ENCODE measurements at regions of chr1 and their contacts with region 1.

Region 1: GRCh38 chr1:24586970-24587820 is 31.3 kb downstream of the NCMAP start:
- DNase-seq: peak; percentile 71
- H3K4me3 Mint-ChIP-seq: peak overlapping the region; percentile 24
- H3K27ac Mint-ChIP-seq: peak overlapping the region; percentile 72
- H3K4me1 Mint-ChIP-seq: peaks cover 5% of the 10 kb centered on the region
- H3K27me3 Mint-ChIP-seq: no peaks in the 10 kb centered on the region

Region 2: GRCh38 chr1:24424207-24424606 is 163.0 kb before region 1 on chr1:
- CTCF ChIA-PET with region 1: interaction called, 39 read pairs
- intact Hi-C with region 1: no loop called
- DNase-seq: peak; percentile 31
- H3K4me3 Mint-ChIP-seq: no peak overlapping the region
- H3K27ac Mint-ChIP-seq: peak overlapping the region; percentile 34
- H3K4me1 Mint-ChIP-seq: peaks cover 68% of the 10 kb centered on the region
- H3K27me3 Mint-ChIP-seq: no peaks in the 10 kb centered on the region

Region 3: GRCh38 chr1:24526940-24527542 is 60.2 kb before region 1 on chr1:
- CTCF ChIA-PET with region 1: interaction called, 10 read pairs
- intact Hi-C with region 1: no loop called
- DNase-seq: peak; percentile 74
- H3K4me3 Mint-ChIP-seq: no peak overlapping the region
- H3K27ac Mint-ChIP-seq: peak overlapping the region; percentile 63
- H3K4me1 Mint-ChIP-seq: peaks cover 70% of the 10 kb centered on the region
- H3K27me3 Mint-ChIP-seq: no peaks in the 10 kb centered on the region

Region 4: DNA sequence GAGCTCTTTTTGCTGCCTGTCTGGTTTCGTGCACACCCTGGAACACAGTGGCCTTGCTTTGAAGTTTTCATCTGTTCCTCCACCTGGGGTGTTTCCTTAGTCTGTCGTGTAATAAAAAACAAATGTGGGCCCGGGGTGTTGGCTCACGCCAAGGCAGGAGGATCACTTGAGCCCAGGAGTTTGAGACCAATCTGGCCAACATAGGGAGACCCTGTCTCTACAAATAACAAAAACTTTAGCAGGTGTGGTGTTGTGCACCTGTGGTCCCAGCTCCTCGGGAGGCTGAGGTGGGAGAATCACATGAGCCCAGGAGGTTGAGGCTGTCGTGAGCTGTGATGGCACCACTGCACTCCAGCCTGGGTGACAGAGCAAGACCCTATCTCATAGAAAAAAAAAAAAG is 26.8 kb before region 1 on chr1:
- CTCF ChIA-PET with region 1: interaction called, 14 read pairs
- intact Hi-C with region 1: no loop called
- DNase-seq: no peak
- H3K4me3 Mint-ChIP-seq: no peak overlapping the region
- H3K27ac Mint-ChIP-seq: no peak overlapping the region
- H3K4me1 Mint-ChIP-seq: peaks cover 13% of the 10 kb centered on the region
- H3K27me3 Mint-ChIP-seq: peaks cover 3% of the 10 kb centered on the region

Region 5: DNA sequence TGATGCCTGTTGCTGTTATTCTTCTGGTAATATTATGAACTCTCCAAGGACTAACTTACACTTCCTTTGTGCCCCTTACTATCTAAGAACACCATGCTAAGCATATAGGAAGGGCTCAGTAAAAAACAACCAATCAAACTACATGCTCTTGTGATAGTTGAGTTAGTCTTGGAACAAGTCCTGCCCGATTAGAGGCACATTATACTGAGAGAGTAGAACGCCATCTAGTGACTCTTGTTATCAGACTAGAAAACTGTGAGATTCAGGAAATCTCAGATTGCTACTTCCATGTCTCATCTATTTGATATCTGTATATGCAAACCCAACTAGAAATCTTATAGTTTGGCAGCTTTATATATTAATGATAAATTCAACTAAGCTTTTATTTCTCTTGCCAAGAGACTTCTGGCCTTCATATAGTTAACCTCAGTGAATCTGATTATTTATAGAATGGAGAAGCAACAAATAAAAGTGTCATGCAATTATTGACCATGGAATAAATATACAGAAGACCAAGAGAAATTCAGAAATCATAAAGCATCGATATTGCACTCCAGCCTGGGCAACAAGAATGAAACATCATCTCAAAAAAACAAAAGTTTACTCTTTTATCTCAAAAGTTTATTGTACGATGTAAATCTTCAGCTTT is 48.1 kb after region 1 on chr1:
- CTCF ChIA-PET with region 1: interaction called, 4 read pairs
- intact Hi-C with region 1: loop called (anchors 5 kb)
- DNase-seq: no peak
- H3K4me3 Mint-ChIP-seq: no peak overlapping the region
- H3K27ac Mint-ChIP-seq: no peak overlapping the region
- H3K4me1 Mint-ChIP-seq: peaks cover 11% of the 10 kb centered on the region
- H3K27me3 Mint-ChIP-seq: no peaks in the 10 kb centered on the region

Region 6: DNA sequence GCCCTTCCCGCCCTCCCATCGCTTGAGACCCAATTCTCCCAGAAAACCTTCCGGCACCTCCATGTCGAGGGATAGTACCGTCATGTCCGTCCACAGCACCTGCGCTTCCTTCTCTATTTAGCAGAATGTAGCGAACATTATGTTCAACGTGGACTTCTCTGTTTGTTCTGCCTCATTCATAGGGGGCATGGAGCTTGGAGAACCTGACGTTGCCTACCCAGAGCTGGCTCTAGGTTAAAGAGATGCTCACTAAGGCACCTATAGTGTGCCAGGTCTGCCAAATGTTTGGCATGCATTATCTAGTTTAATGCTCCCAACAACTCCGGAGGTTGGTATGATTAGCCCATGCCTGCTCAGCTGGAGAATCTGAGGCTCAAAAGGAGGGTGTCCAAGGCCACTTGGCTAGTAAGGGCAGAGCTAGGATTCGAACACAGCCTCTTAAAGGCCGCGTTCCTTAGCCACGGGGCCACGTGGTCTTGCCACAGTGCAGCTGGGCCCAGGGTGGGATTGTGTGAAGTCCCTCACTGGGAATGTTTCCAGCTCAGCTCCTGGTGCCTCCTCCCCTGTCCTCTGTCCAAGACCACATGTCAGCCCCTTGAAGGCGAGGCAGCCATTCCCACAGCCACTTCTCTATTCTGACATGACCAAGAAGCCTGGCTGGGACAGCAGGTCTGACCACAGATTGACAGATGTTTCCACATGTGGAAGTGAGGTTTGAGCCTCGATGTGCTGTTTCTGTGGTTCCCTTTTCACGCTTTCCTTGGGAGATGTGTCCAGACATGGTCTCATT is 285.1 kb after region 1 on chr1:
- CTCF ChIA-PET with region 1: no interaction called
- intact Hi-C with region 1: no loop called
- DNase-seq: no peak
- H3K4me3 Mint-ChIP-seq: no peak overlapping the region
- H3K27ac Mint-ChIP-seq: no peak overlapping the region
- H3K4me1 Mint-ChIP-seq: peaks cover 8% of the 10 kb centered on the region
- H3K27me3 Mint-ChIP-seq: no peaks in the 10 kb centered on the region

Measured in activated naive CD4-positive, alpha-beta T cell treated with anti-CD3 and anti-CD28 coated beads for 36 hours (primary cell).